A549 (cell line): ENCODE measurements at regions of chr3 and their contacts with region 1.

Region 1: GRCh38 chr3:113575206-113575605 is 42.9 kb downstream of the SIDT1 start:
- DNase-seq: peak in 1 of 2 experiments; percentile 59
- ATAC-seq: peak in 1 of 2 experiments; percentile 51; a peak in 3 of 6 replicates
- H3K4me3 ChIP-seq: no peak overlapping the region
- H3K27ac ChIP-seq: peak overlapping the region in 1 of 2 experiments; percentile 44; a peak in 1 of 6 replicates
- H3K4me1 ChIP-seq: peaks cover 25% of the 10 kb centered on the region
- CTCF ChIP-seq: no peak
- EP300 ChIP-seq: no peak
- POLR2A ChIP-seq: no peak
- RAD21 ChIP-seq: no peak

Region 2: DNA sequence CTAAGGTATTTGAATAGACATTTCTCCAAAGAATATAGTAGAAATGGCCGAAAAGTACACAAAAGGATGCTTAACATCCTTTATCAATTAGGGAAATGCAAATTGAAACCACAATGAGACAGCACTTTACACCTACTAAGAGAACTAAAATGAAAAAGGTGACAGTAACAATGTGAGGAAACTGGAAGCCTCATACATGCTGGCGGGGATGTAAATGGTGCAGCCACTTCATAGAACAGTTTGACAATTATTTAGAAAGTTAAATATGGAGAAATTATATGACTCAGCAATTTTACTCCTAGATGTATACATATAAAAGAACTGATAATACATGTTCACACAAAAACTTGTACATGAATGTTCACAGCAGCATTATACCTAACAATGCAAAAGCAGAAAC is 73.6 kb before region 1 on chr3:
- CTCF ChIA-PET with region 1: interaction called, 62 read pairs
- POLR2A ChIA-PET with region 1: no interaction called
- DNase-seq: no peak
- ATAC-seq: no peak
- H3K4me3 ChIP-seq: no peak overlapping the region
- H3K27ac ChIP-seq: no peak overlapping the region; a peak in 1 of 6 replicates
- H3K4me1 ChIP-seq: peaks cover 25% of the 10 kb centered on the region
- CTCF ChIP-seq: no peak
- EP300 ChIP-seq: no peak
- POLR2A ChIP-seq: no peak
- RAD21 ChIP-seq: no peak

Region 3: DNA sequence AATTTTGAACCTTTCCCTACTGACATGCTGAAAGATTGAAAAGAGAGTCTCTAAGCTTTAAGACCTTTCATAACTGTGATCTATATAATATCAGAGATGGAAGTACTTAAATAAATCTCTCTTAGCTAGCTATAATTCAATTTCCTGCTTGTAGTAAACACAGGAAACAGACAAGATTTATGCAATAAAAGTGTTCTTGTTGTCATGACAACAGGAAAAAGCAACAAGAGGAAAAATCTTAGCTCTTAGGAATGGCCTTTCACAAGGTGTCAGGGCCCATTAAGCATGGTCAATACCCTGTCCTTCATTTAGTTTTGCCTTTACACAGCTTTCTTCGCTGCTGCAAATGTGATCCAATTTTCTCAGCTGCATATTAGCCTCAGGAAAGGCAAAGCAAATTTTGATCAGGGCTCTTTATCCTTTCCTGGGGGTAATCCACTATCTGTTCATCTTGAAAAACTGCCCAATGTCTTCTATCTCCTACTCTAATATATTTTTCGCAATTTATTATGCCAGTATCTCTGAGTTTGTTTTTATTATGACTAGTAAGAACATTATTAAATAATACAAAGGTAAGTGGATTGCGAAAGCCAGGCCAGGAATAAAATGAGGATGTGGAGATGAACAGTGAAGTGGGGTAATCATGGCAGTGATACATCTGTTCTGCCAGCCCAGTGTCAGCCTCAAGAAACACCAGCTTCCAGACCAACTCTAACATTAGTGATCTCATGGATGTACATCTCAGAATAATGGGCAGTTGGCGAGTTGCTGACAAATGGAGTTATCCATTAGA is 14.2 kb before region 1 on chr3:
- CTCF ChIA-PET with region 1: interaction called, 20 read pairs
- POLR2A ChIA-PET with region 1: no interaction called
- DNase-seq: peak in 1 of 2 experiments; percentile 51
- ATAC-seq: no peak
- H3K4me3 ChIP-seq: no peak overlapping the region
- H3K27ac ChIP-seq: no peak overlapping the region
- H3K4me1 ChIP-seq: peaks cover 38% of the 10 kb centered on the region
- CTCF ChIP-seq: no peak
- EP300 ChIP-seq: no peak
- POLR2A ChIP-seq: no peak
- RAD21 ChIP-seq: no peak

Region 4: DNA sequence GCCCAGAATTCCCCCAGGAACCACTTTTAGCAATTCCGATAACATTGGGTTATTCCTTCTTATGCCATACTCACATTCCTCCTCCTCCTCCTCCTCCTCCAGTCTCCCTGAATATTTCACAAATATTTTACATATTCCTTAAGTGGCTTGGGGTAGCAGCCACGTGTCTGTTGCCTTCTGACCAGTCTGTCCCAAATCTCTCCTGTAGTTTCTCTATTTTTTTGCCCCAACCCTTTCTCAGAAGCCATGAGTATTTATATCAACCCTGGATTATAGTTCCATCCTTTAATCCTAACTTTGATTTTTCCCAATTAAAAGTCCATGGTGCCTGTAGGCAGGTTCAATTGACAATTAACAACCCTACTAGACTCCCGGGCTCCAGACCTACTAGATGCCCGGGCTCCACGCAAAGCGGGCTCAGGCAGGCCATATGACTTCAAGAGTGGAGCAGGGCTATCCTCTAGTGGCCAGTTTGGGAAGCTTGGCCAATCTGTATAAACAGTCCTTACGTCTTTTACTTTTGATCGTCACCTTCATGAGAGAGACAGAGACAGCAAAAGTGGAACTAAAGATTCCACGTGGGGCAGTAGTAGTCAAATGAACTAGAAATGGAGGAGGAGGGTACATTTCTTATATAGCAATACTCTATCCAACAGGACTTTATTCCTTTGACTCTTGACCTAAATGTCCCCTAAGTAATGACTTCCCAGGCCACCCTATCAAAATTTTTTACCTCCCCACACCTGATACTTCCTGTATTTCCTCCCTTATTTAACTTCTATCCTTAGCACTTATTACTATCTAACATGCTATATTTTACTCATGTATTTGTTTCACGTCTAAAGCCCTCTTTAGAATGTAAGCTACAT is 51.5 kb after region 1 on chr3:
- CTCF ChIA-PET with region 1: interaction called, 10 read pairs
- POLR2A ChIA-PET with region 1: no interaction called
- DNase-seq: peak; percentile 72 to 82
- ATAC-seq: peak; percentile 94 to 99
- H3K4me3 ChIP-seq: no peak overlapping the region
- H3K27ac ChIP-seq: no peak overlapping the region
- H3K4me1 ChIP-seq: no peaks in the 10 kb centered on the region
- CTCF ChIP-seq: peak; percentile 98
- EP300 ChIP-seq: no peak
- POLR2A ChIP-seq: no peak
- RAD21 ChIP-seq: peak; percentile 97